ENCODE measurements at regions of chr6 and their contacts with region 1.

Region 1: DNA sequence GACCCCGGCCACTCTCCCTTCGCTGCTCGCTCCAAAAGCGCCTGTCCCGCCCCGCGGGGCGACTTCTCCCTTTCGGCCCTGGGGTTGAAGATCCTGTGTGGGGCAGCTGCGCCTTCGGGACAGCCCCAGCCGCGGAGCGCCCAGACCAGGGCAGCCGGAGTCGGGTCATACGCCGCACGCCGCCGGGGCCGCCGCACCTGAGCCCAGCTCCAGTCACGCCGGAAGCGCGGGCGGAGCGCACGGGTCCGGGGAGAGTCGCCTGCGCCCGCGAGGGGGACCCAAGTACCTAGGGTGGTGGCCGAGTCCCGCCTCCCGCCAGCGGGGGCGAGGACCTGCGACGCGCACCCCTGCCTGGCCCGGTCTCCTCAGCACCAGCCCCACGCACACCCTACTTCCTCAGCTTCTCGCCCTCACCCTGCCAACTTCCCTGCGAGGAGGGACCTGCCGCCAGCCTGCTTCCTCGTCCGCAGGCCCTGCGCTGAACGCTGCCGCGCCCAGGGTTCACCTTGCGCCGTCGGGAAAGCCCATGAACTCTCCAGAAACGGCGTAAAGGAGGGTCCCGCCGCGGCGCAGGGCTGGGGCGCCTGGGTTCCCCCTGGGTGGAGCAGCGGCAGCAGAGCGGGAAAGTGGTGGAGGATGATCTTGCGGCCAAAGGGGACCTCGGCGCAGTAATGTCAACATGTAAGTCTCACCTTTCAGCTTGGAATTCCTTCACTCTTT is at the start of gene ADGRG6:
- DNase-seq: peak; percentile 72
- H3K4me3 ChIP-seq: peak within 1 kb of the TSS; percentile 82 to 90 (median 89)
- H3K27ac ChIP-seq: peak within 1 kb of the TSS; percentile 91
- H3K4me1 ChIP-seq: peaks cover 40% of the 10 kb centered on the region
- H3K27me3 ChIP-seq: no peaks in the 10 kb centered on the region
- CTCF ChIP-seq: peak in 1 of 2 donors; percentile 9
- POLR2A ChIP-seq: peak; percentile 15
- total RNA-seq, gene ADGRG6: 99.3 and 113 TPM in 2 replicates

Region 2: GRCh38 chr6:142146828-142147662 is 154.8 kb before region 1 on chr6 and contains the starts of genes NMBR and VTA1:
- CTCF ChIA-PET with region 1: interaction called, 4 read pairs
- POLR2A ChIA-PET with region 1: no interaction called
- dilution Hi-C with region 1: no loop called
- intact Hi-C with region 1: loop called (anchors 5 kb)
- DNase-seq: peak; percentile 99
- H3K4me3 ChIP-seq: peak within 1 kb of the TSS; percentile 77 to 92 (median 91)
- H3K27ac ChIP-seq: peak within 1 kb of the TSS; percentile 50
- H3K4me1 ChIP-seq: peaks cover 21% of the 10 kb centered on the region
- H3K27me3 ChIP-seq: no peaks in the 10 kb centered on the region
- CTCF ChIP-seq: peak; percentile 79 to 89
- POLR2A ChIP-seq: peak; percentile 90
- total RNA-seq, gene NMBR: not detected in 2 replicates
- total RNA-seq, gene VTA1: 40.9 and 45.8 TPM in 2 replicates

Region 3: DNA sequence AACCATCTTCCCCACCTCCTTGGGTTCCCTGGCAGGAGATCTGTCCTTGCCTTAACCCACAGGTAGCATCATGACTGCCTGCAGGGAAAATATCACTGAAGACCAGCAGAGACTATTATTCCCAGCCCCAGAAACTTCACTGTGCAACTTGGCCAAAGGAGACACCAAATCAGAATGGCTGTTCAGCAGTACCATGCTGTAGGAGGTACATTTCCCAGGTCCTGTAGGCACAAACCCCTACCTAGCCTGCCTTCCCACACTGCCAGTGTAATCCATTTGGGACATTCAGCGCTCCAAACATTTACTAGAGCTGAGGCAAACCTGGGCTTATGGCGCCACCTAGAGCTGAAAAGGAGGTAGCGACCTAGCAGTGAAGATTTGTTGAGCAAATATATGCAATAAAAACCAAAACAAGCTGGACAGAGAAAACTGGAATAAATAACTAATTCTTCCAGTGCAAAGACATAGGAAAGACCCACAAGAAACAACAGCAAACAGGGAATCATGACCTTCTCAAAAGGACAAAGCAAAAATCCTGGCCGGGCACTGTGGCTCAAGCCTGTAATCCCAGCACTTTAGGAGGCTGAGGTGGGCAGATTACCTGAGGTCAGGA is 94.4 kb before region 1 on chr6:
- CTCF ChIA-PET with region 1: interaction called, 8 read pairs
- POLR2A ChIA-PET with region 1: no interaction called
- dilution Hi-C with region 1: no loop called
- intact Hi-C with region 1: loop called (anchors 1 kb)
- DNase-seq: peak; percentile 71
- H3K4me3 ChIP-seq: no peak overlapping the region
- H3K27ac ChIP-seq: no peak overlapping the region
- H3K4me1 ChIP-seq: peaks cover 14% of the 10 kb centered on the region
- H3K27me3 ChIP-seq: no peaks in the 10 kb centered on the region
- CTCF ChIP-seq: peak; percentile 73
- POLR2A ChIP-seq: no peak

Region 4: GRCh38 chr6:142279350-142280180 is 22.2 kb before region 1 on chr6:
- CTCF ChIA-PET with region 1: interaction called, 10 read pairs
- POLR2A ChIA-PET with region 1: no interaction called
- dilution Hi-C with region 1: no loop called
- intact Hi-C with region 1: no loop called
- DNase-seq: peak; percentile 27
- H3K4me3 ChIP-seq: no peak overlapping the region
- H3K27ac ChIP-seq: no peak overlapping the region
- H3K4me1 ChIP-seq: peaks cover 5% of the 10 kb centered on the region
- H3K27me3 ChIP-seq: no peaks in the 10 kb centered on the region
- CTCF ChIP-seq: no peak
- POLR2A ChIP-seq: no peak

Region 5: DNA sequence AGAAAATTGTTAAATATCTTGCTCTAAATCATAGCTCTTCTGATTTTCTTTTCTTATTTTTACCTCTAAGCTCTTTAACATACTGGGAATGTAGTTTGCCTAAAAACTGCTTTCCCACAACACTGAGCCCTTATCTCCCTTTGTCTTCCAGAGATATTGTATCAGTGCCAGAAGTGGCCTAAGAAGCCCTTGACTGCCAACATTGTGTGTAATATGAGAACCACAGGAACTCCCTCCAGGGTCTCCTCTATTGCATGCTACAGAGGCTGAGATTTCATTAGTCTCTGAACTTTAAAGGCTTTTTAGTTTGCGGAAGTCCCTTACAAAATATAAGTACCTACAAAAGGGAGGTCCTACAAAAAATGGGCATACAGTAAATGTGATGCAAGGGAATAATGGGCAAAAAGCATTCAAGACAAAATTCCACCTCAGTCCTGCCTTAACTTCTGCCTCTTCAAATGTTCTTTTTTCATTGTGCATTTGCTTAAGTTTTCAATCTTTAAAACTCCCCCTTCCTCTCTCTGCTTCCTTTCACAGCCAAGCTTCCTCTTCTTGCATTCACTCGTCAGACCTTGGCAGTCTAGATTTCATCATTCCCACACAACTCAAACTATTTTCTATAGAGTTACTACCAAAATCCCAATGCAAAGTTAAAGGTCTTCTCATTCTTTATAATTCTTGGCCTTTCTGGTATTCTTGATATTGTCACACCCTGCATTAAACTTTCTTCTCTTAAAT is 76.5 kb after region 1 on chr6:
- CTCF ChIA-PET with region 1: interaction called, 8 read pairs
- POLR2A ChIA-PET with region 1: interaction called, 8 read pairs
- dilution Hi-C with region 1: no loop called
- intact Hi-C with region 1: loop called (anchors 1 kb)
- DNase-seq: peak; percentile 96
- H3K4me3 ChIP-seq: no peak overlapping the region
- H3K27ac ChIP-seq: peak overlapping the region; percentile 85
- H3K4me1 ChIP-seq: peaks cover 58% of the 10 kb centered on the region
- H3K27me3 ChIP-seq: no peaks in the 10 kb centered on the region
- CTCF ChIP-seq: no peak
- POLR2A ChIP-seq: peak; percentile 46

Region 6: GRCh38 chr6:142395768-142396231 is 94.0 kb after region 1 on chr6:
- CTCF ChIA-PET with region 1: interaction called, 10 read pairs
- POLR2A ChIA-PET with region 1: no interaction called
- dilution Hi-C with region 1: no loop called
- intact Hi-C with region 1: loop called (anchors 2 kb)
- DNase-seq: peak; percentile 94
- H3K4me3 ChIP-seq: no peak overlapping the region
- H3K27ac ChIP-seq: peak overlapping the region; percentile 99
- H3K4me1 ChIP-seq: peaks cover 47% of the 10 kb centered on the region
- H3K27me3 ChIP-seq: no peaks in the 10 kb centered on the region
- CTCF ChIP-seq: no peak
- POLR2A ChIP-seq: no peak

Region 7: GRCh38 chr6:142537612-142538478 is 236.0 kb after region 1 on chr6:
- CTCF ChIA-PET with region 1: no interaction called
- POLR2A ChIA-PET with region 1: no interaction called
- dilution Hi-C with region 1: no loop called
- intact Hi-C with region 1: loop called (anchors 2 kb)
- DNase-seq: peak; percentile 18
- H3K4me3 ChIP-seq: no peak overlapping the region
- H3K27ac ChIP-seq: no peak overlapping the region
- H3K4me1 ChIP-seq: no peaks in the 10 kb centered on the region
- H3K27me3 ChIP-seq: no peaks in the 10 kb centered on the region
- CTCF ChIP-seq: peak; percentile 48 to 53
- POLR2A ChIP-seq: no peak

Region 8: DNA sequence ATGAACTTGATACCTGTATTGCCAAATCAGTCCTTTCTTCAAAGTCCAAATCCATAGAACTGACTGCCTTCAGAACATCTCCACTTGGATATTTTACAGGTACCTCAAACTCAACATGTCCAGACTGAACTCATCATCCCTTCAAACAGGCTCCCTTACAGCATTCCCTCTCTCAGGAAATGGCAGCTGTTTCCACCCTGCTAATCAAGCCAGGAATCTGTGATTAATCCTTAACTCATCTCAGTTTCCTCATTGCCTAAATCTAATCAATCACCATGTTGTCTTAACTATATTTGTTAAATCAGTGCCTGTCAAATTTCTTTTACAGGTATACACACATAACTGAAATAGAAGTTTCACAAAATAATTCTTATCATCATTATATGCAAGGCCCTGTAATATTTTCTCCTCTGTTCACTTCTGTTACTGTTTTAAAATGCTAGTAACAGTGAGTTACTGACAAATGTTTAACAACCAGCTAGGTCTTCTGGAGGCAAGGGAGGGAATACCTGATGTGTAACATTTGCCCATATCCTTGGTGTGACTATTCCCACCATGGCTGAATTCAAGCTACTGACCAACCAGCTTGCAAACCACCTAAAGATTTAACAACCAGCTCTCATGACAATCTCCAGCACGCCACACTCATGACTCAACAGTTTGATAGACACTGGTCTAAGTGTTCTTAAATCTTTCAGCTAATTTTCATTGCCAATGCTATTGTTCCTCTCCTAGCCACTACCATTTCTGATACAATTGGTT is 1023.7 kb after region 1 on chr6:
- CTCF ChIA-PET with region 1: no interaction called
- POLR2A ChIA-PET with region 1: no interaction called
- dilution Hi-C with region 1: no loop called
- intact Hi-C with region 1: no loop called
- DNase-seq: peak; percentile 82
- H3K4me3 ChIP-seq: no peak overlapping the region
- H3K27ac ChIP-seq: peak overlapping the region; percentile 33
- H3K4me1 ChIP-seq: peaks cover 14% of the 10 kb centered on the region
- H3K27me3 ChIP-seq: no peaks in the 10 kb centered on the region
- CTCF ChIP-seq: no peak
- POLR2A ChIP-seq: peak; percentile 18